ENCODE measurements at regions of chr18 and their contacts with region 1.

Region 1: DNA sequence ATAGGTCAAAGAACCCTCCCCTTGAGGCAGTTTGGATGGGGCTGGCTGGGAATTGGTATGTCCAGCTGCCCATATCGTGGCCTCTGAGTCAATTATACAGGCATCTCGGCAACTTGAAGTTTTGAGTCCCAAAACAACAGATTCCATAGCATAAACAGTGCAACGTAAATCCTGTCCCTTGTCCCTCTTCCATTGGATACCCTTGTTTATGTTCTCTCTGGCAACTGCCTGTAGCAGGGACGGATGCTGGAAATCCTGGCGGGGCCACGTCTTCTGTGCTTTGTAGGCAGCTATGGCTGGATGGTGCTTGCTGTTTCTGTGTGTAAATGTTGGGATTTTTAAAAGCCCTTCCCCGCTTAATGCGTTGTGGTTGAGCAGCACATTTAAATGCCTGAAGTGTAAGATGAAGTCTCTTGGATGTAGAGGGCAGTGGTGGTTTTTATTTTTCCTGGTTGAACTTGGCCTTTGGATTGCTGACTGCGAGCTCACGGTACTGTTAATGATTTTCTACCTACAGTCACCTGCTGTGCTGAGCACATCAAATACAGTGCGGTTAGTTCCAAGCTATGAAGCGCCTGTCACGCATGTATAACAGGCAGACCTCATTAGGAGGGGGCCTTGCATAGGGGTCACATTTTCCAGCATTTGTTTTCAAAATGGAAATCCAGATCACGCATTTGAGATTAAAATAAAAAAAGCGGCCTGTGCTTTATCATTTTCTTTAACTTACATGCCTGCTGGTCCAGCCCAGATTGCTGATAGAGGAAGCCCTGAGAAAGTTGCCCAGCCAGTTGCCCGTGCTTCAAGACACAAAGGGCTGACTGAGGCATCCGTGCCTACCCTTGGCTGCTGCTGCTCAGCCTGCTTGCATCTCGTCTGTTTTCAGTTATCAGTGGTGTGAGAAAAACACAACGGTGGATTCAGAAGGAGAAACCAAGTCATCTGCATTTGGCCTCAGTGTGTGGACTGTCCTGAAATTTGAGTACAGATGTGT is 84.7 kb downstream of the NEDD4L start:
- DNase-seq: no peak
- ATAC-seq: no peak

Region 2: GRCh38 chr18:57649556-57650500 is 478.9 kb before region 1 on chr18:
- intact Hi-C with region 1: loop called (anchors 10 kb)
- DNase-seq: no peak
- ATAC-seq: peak; percentile 90

Region 3: GRCh38 chr18:57881818-57882413 is 246.8 kb before region 1 on chr18:
- intact Hi-C with region 1: loop called (anchors 5 kb)
- DNase-seq: peak; percentile 54
- ATAC-seq: peak; percentile 92

Region 4: GRCh38 chr18:57931038-57931437 is 197.6 kb before region 1 on chr18:
- intact Hi-C with region 1: no loop called
- DNase-seq: no peak
- ATAC-seq: no peak

Region 5: DNA sequence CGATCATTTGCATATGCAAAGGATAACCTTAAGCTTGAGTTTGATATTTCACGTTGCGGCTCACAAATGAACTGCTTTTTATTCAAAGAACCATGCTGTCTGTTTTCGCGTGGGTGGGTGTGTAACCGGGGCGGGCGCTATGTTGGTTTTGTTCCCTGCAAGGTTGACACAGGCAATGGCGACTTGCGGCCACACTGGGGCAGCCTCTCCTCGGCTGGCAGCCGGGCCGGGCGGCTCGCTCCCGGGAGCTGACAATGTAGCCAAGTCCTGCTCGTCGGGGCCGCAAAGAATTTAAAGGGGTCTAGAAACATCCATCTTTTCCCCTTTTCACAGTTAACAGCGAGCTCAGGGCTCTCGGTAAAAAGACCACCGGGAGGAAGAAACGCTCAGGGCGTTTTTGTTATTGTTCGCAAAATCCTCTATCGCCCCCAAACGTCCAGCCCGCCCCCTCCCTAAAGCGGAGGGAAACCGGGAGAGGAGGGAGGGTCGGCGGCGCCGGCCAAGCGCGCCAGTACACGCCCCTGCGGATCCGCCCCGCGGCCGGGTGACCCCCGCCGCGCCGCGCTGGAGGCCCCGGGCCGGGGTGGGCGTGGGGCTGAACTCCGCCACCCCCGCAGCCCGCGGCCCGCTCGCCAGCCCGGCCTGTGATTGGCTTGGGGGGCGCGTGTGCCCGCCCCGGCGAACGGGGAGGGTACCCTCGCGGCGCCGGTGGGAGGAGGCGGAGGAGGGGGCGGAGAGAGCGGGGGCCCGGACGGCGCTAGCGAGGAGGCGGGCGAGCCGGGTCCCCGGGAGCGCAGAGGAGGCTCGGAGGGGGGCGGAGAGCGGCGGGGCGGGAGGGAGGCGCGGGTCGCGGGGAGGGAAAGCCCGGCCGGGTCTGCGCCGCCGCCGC is 84.9 kb before region 1 on chr18 and contains the start of gene NEDD4L:
- intact Hi-C with region 1: loop called (anchors 5 kb)
- DNase-seq: peak; percentile 87
- ATAC-seq: peak; percentile 92
- total RNA-seq, gene NEDD4L: 51.4 TPM

Region 6: DNA sequence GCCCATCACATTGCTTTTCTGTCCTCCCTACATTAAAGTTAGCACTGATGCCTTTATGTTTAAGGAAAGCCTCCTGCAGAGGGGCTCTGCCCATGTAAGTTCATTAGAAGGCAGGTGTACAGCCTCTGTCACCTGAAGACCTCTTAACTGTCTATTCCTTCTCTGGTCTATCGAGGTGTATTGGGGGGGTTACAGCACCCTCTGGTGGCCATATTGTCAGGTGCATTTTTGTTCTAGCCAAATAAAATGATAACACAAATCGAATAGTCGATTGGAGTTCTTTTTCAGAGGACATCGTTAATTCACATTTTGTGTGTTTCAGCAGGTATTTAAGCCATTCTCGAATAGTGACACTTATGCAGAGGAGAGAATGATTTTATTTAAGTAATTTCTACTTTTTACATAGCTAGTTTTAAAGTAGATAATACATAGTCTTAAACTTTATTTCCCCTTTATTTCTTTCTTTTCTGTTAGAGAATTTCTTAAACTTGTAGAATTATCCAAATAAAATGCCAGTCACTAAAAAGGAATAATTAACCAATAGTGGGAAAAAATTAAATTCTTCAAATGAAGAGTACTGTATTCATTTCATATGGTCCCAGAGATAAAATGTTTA is 52.2 kb after region 1 on chr18:
- intact Hi-C with region 1: loop called (anchors 10 kb)
- DNase-seq: no peak
- ATAC-seq: peak; percentile 56